Dendritic cell treated with granulocyte-macrophage colony-stimulating factor and Interleukin-4, amounts not matched to agents 40 ng/mL and 50 ng/mL, for 4 days (primary cell): ENCODE measurements at regions of chr4 and their contacts with region 1.

Region 1: DNA sequence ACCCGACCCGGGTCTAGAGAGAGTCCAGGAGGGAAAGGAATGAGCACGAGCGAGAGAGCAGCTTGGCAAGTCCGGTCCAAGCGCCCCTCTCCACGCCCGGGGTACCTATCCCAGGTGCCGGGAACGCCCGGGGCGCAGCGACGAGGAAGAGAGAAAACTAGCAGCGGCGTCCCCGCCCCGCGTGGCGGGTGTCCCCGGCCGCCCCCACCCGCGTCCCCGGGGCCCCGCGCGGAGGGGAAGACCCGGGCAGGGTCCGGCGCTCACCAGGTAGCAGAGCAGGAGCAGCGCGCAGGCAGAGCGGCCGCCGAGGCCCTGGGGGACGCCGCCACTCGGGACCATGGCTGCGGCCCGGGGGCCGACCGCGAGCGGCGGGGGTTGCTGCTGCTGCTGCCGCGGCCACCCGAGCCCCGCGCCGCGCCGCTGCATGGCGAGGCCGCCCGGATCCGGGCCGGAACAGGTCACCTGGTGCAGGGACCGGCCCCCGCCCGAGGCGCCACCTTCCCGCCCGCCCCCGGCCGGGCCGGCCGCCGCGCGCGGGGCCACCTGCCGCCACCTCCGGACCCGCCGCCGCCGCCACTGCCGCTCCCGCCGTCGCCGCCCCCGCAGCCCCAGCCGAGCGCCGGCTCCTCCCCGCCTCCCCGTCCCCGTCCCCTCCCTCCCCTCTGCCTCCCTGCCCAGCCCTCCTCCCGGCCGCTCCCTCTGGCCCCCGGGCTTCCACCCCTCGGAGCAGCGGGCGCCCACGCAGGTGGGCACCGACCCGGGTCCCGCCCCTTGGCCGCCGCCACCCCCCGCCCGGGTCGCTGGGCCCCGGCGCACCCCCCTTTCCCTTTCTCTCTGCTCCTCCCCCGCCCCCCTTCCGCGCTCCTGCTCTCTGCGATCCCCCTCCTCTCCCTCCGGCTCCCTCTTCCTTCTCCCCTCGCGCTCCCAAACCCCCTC is at the start of gene SEL1L3:
- H3K4me3 Mint-ChIP-seq: peak within 1 kb of the TSS; percentile 100
- H3K27ac Mint-ChIP-seq: peak within 1 kb of the TSS; percentile 97
- H3K4me1 Mint-ChIP-seq: peaks cover 45% of the 10 kb centered on the region
- H3K27me3 Mint-ChIP-seq: peaks cover 26% of the 10 kb centered on the region

Region 2: DNA sequence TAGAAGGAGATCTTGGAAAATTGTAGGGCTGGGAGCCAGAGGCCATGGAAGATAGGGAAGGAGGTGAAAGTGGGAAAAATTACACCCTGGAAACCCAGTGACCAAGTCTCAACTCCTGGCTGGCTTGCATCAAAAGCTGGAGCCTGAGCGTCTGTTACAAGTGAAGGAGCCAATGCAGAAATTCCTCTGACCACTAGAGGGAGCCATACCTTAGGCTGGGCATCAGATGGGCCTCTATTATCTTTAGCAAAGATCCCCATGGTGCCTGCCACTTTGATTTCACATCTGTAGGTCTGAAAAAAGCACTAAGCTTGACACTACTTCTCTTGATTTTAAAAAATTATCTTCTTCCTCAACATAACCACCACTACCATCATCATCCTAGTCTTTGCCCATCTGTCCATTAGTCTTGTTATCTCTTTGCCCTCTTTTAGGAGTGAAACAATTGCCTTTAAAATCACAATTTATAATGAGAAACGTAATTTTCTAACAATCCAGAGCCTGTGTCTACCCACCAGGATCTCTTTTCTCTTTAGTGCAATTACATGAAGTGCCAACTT is 422.7 kb before region 1 on chr4:
- intact Hi-C with region 1: loop called (anchors 5 kb)
- H3K4me3 Mint-ChIP-seq: no peak overlapping the region
- H3K27ac Mint-ChIP-seq: no peak overlapping the region
- H3K4me1 Mint-ChIP-seq: no peaks in the 10 kb centered on the region
- H3K27me3 Mint-ChIP-seq: peaks cover 3% of the 10 kb centered on the region

Region 3: GRCh38 chr4:25843340-25844097 is 19.2 kb before region 1 on chr4:
- intact Hi-C with region 1: loop called (anchors 2 kb)
- H3K4me3 Mint-ChIP-seq: peak overlapping the region; percentile 39
- H3K27ac Mint-ChIP-seq: peak overlapping the region; percentile 78
- H3K4me1 Mint-ChIP-seq: peaks cover 54% of the 10 kb centered on the region
- H3K27me3 Mint-ChIP-seq: peaks cover 9% of the 10 kb centered on the region

Region 4: DNA sequence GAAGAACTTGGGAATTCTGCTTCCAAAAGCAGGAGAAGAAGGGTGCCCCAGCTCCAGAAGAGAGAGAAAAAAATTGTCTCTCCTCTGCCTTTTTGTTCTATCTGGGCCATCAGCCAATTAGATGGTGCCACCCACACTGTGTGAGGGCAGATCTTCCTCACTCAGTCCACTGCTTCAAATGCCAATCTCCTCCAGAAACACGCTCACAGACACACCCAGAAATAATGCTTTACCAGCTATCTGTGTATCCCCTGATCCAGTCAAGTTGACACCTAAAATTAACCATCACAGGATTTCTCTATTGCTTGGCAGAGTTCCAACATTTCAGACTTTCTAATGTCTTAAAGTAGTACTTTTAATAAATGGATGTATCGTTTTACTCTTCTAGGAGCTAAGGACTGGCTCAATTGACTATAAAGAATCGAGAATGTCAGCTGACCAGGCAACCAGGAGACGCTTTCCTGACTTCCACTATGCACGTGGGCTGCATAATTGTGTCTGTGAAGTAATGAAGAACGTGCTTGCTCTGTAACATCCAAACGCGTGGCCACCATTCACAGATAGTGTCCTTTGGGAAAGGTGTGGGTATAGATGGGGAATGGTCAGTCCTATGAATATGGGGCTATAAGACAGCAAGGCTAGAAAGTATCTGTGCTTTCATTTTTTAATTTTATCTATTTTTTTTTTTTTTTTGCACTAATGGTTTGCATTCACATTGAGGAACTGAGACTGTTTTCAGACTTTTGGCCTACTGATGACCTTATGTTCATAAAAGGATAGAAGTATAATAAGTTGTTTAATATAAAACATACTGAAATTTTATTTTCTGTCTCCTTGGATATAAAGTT is 41.4 kb after region 1 on chr4:
- intact Hi-C with region 1: loop called (anchors 5 kb)
- H3K4me3 Mint-ChIP-seq: no peak overlapping the region
- H3K27ac Mint-ChIP-seq: no peak overlapping the region
- H3K4me1 Mint-ChIP-seq: peaks cover 30% of the 10 kb centered on the region
- H3K27me3 Mint-ChIP-seq: peaks cover 16% of the 10 kb centered on the region

Region 5: DNA sequence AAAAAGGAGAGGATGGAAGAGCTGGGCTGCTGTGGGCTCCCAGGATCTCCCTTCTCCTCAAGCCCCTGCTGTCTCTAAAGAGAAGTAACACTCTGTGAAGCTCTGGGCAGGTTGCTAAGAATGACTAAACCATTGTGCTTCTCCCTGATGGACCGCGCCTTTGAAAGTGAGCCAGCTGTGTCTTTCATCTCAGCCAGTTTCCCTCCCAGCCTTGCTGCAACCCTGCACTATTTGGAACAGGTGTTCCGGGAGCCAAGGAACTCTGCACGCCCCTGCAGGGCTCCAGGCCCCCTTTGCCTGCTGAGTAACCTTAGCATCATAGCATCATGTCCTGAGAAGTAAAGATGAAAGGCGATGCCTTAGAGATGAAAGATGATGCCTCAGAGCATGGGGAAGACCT is 91.1 kb after region 1 on chr4:
- intact Hi-C with region 1: no loop called
- H3K4me3 Mint-ChIP-seq: no peak overlapping the region
- H3K27ac Mint-ChIP-seq: no peak overlapping the region
- H3K4me1 Mint-ChIP-seq: peaks cover 34% of the 10 kb centered on the region
- H3K27me3 Mint-ChIP-seq: peaks cover 46% of the 10 kb centered on the region

Region 6: GRCh38 chr4:27096142-27096824 is 1233.6 kb after region 1 on chr4:
- intact Hi-C with region 1: no loop called
- H3K4me3 Mint-ChIP-seq: no peak overlapping the region
- H3K27ac Mint-ChIP-seq: no peak overlapping the region
- H3K4me1 Mint-ChIP-seq: peaks cover 10% of the 10 kb centered on the region
- H3K27me3 Mint-ChIP-seq: peaks cover 56% of the 10 kb centered on the region